ENCODE measurements at regions of chrX and their contacts with region 1.

Region 1: DNA sequence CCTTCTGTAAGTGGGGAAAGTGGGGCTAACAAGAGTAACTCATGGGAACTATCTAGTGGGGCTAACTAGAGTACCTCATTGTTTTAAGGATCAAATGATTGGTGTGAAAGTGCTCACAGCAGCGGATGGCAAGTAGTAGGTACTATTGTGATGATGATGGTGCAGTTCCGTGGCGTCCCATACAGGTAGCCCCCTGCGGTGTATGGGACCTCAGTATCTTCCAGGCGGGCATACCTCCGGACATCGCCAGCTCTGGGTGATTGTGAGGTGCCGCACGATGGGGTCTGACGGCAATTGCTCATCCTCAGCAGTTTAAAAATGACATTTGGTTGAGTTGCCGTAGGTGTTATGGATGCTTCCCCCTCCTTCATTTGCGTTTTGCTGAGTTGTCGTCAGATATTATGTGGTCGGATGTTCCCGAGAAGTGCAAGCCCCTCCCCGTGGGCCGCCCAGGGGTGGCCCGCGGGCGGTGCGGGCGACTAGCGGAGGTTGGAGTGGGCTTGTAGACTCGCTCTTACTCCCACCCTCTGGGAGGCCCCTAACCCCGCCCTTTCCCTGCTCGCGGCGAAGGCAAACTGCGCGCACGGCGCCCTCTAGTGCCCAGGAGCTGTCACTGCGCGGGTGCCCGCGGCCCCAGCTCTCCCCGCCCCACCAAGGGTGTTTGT is 18.3 kb upstream of the GPR101 start:
- DNase-seq: peak; percentile 12
- ATAC-seq: peak; percentile 98
- H3K4me3 ChIP-seq: peak overlapping the region in 1 of 2 experiments; percentile 13; a peak in 1 of 4 replicates
- H3K27ac ChIP-seq: no peak overlapping the region
- H3K4me1 ChIP-seq: no peaks in the 10 kb centered on the region
- H3K27me3 ChIP-seq: peaks cover 17% of the 10 kb centered on the region
- CTCF ChIP-seq: peak; percentile 34 to 71 (median 71); a peak in 5 of 6 replicates
- POLR2A ChIP-seq: no peak
- RAD21 ChIP-seq: peak; percentile 58

Region 2: DNA sequence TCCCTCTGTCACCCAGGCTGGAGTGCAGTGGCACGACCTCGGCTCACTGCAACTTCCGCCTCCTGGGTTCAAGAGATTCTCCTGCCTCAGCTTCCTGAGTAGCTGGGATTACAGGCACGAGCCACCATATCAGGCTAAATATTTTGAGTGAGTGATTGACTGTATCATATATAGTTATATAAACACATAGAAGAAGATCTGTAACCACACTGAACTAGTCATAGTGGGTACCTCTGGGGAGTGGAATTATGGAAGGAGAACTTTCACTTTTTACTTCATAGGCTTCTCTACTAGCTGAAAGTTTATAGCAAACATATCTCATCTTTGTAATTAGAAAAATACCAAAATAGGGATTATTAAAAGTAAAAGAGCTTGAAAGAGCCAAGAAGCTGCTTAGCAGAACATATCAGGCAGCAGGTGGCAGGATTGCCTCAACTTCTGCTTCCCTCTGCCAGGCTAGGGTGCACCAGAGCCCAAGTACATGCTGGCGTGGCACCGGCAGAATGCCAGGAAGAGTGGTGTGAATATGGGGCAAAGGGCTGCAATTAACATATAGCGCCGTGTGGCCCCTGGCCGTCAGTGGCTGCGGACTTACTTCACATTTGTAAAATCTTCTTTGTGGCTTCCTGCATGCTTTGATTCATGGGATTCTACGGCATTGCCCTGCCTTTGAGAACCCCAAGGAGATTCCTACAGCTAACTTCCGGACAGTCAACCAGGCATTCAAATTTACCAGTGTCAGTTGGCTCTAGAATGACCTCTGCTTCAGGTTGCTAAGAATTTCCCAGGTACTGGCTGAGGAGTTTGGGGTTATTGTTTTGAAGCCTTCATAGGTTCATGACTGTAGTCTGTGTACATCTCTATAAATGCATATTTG is 443.6 kb before region 1 on chrX:
- CTCF ChIA-PET with region 1: interaction called, 6 read pairs
- POLR2A ChIA-PET with region 1: no interaction called
- RAD21 ChIA-PET with region 1: no interaction called
- intact Hi-C with region 1: loop called (anchors 5 kb)
- DNase-seq: peak; percentile 3
- ATAC-seq: peak; percentile 68
- H3K4me3 ChIP-seq: no peak overlapping the region
- H3K27ac ChIP-seq: no peak overlapping the region
- H3K4me1 ChIP-seq: no peaks in the 10 kb centered on the region
- H3K27me3 ChIP-seq: no peaks in the 10 kb centered on the region
- CTCF ChIP-seq: peak; percentile 20 to 36 (median 21); a peak in 4 of 6 replicates
- POLR2A ChIP-seq: no peak
- RAD21 ChIP-seq: peak; percentile 62

Region 3: GRCh38 chrX:136711147-136711546 is 341.0 kb before region 1 on chrX:
- CTCF ChIA-PET with region 1: no interaction called
- POLR2A ChIA-PET with region 1: no interaction called
- RAD21 ChIA-PET with region 1: no interaction called
- intact Hi-C with region 1: loop called (anchors 1 kb)
- DNase-seq: no peak
- ATAC-seq: peak; percentile 77
- H3K4me3 ChIP-seq: no peak overlapping the region
- H3K27ac ChIP-seq: no peak overlapping the region
- H3K4me1 ChIP-seq: no peaks in the 10 kb centered on the region
- H3K27me3 ChIP-seq: no peaks in the 10 kb centered on the region
- CTCF ChIP-seq: peak; percentile 20 to 50 (median 30); a peak in 4 of 6 replicates
- POLR2A ChIP-seq: no peak
- RAD21 ChIP-seq: peak; percentile 76

Region 4: GRCh38 chrX:136953867-136954787 is 98.0 kb before region 1 on chrX:
- CTCF ChIA-PET with region 1: interaction called, 3 read pairs
- POLR2A ChIA-PET with region 1: no interaction called
- RAD21 ChIA-PET with region 1: no interaction called
- intact Hi-C with region 1: loop called (anchors 1 kb)
- DNase-seq: peak; percentile 40
- ATAC-seq: peak; percentile 91
- H3K4me3 ChIP-seq: no peak overlapping the region
- H3K27ac ChIP-seq: no peak overlapping the region
- H3K4me1 ChIP-seq: no peaks in the 10 kb centered on the region
- H3K27me3 ChIP-seq: no peaks in the 10 kb centered on the region
- CTCF ChIP-seq: peak; percentile 29 to 63 (median 53); a peak in 5 of 6 replicates
- POLR2A ChIP-seq: no peak
- RAD21 ChIP-seq: peak; percentile 41

Measured in HCT116 (cell line).